ENCODE measurements at regions of chr19 and their contacts with region 1.

Region 1: GRCh38 chr19:11482384-11483050 is 1.7 kb upstream of the ELAVL3 start:
- DNase-seq: peak; percentile 89
- ATAC-seq: peak; percentile 8; the same call in 1 of the 2 replicates
- H3K4me3 Mint-ChIP-seq: peak overlapping the region; percentile 62
- H3K27ac Mint-ChIP-seq: no peak overlapping the region
- H3K4me1 Mint-ChIP-seq: peaks cover 13% of the 10 kb centered on the region
- H3K27me3 Mint-ChIP-seq: peaks cover 48% of the 10 kb centered on the region
- CTCF ChIP-seq: peak; percentile 97

Region 2: GRCh38 chr19:11361037-11361770 is 121.3 kb before region 1 on chr19:
- CTCF ChIA-PET with region 1: interaction called, 12 read pairs
- POLR2A ChIA-PET with region 1: no interaction called
- DNase-seq: peak; percentile 100
- ATAC-seq: peak; percentile 91
- H3K4me3 Mint-ChIP-seq: peak overlapping the region; percentile 76
- H3K27ac Mint-ChIP-seq: no peak overlapping the region
- H3K4me1 Mint-ChIP-seq: peaks cover 16% of the 10 kb centered on the region
- H3K27me3 Mint-ChIP-seq: peaks cover 53% of the 10 kb centered on the region
- CTCF ChIP-seq: no peak

Region 3: GRCh38 chr19:11399667-11400066 is 82.8 kb before region 1 on chr19:
- CTCF ChIA-PET with region 1: no interaction called
- POLR2A ChIA-PET with region 1: no interaction called
- DNase-seq: no peak
- ATAC-seq: no peak
- H3K4me3 Mint-ChIP-seq: no peak overlapping the region
- H3K27ac Mint-ChIP-seq: no peak overlapping the region
- H3K4me1 Mint-ChIP-seq: peaks cover 6% of the 10 kb centered on the region
- H3K27me3 Mint-ChIP-seq: no peaks in the 10 kb centered on the region; the same call in 1 of the 2 replicates
- CTCF ChIP-seq: no peak

Region 4: DNA sequence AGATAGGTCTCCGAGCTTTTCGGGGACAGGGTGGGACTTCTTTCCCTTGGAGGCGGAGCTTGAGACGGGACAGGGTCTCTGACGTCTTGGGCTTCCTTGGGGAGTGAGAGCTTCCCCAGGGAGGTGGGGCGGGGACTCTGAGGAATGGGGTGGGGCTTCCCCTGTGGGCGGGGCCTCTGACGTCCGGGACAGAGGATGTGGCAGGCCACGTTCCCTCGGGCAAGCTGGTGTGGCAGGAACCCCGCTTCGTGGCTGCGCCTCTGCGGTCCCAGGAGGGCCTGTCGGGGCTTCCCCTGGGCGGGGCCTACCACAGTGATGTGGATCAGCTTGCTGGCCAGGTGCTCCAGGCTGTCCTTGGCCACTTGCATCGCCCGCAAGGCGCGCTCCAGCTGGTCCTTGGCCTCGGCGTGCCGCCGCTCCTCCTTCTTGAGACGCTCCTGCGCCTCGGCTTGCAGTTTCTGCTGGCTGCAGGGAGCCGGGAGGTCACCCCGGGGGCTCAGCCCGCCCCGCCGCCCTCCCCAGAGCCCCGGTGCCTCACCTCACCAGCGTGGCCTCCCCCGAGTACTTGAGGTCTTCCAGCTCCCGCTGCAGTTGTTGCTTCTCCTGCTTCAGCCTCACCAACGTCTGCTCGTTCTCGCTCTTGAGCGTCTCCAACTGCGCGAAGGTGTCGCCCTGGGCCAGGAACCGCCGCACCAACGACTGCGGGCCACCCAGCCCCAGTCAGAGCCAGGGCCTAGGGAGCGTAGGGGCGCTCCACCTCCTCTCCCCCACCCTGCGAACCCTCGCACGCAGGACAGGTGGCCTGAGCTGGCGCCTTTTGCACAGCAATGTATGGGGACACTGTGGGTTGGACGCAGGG is 60.1 kb before region 1 on chr19:
- CTCF ChIA-PET with region 1: interaction called, 11 read pairs
- POLR2A ChIA-PET with region 1: interaction called, 4 read pairs
- DNase-seq: peak; percentile 99
- ATAC-seq: peak; percentile 70
- H3K4me3 Mint-ChIP-seq: peak overlapping the region; percentile 87
- H3K27ac Mint-ChIP-seq: peak overlapping the region; percentile 97
- H3K4me1 Mint-ChIP-seq: peaks cover 15% of the 10 kb centered on the region
- H3K27me3 Mint-ChIP-seq: peaks cover 29% of the 10 kb centered on the region
- CTCF ChIP-seq: no peak

Region 5: GRCh38 chr19:11453468-11454341 is 28.8 kb before region 1 on chr19:
- CTCF ChIA-PET with region 1: interaction called, 37 read pairs
- POLR2A ChIA-PET with region 1: interaction called, 8 read pairs
- DNase-seq: peak; percentile 64
- ATAC-seq: peak; percentile 49
- H3K4me3 Mint-ChIP-seq: no peak overlapping the region; the same call in 1 of the 2 replicates
- H3K27ac Mint-ChIP-seq: peak overlapping the region; percentile 93
- H3K4me1 Mint-ChIP-seq: peaks cover 28% of the 10 kb centered on the region
- H3K27me3 Mint-ChIP-seq: no peaks in the 10 kb centered on the region; the same call in 1 of the 2 replicates
- CTCF ChIP-seq: peak; percentile 46; the same call in 1 of the 2 replicates

Region 6: DNA sequence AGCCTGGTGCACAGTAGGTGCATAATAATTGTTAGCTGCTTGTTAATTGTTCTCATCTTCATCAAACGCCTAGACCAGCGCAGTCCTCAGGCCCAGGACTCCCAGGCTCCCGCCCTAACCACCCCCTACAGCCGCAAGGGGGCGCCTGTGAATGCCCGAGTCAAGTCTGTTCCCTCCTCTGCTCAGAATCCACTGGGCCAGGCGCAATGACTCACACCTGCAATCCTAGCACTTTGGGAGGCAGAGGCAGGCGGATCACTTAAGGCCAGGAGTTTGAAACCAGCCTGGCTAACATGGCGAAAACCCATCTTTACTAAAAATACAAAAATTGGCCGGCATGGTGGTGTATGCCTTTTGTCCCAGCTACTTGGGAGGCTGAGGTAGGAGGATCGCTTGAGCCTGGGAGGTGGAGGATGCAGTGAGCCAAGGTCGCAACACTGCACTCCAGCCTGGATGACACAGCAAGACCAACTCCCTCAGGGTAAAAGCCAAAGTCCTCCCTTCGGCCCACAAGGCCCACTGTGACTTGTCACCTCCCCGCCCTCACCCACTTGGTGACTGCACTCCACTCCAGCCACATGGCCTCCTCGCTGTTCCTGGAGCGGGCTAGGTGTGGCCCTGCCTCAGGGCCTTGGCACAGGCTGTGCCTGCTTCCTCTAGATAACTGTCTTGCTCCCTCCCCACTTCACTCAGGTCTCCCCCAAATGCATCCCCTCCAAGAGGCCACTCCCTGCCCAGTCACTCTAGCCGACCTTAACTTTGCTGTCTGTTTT is 14.1 kb after region 1 on chr19:
- CTCF ChIA-PET with region 1: interaction called, 12 read pairs
- POLR2A ChIA-PET with region 1: no interaction called
- DNase-seq: peak; percentile 91
- ATAC-seq: peak; percentile 97
- H3K4me3 Mint-ChIP-seq: no peak overlapping the region
- H3K27ac Mint-ChIP-seq: no peak overlapping the region
- H3K4me1 Mint-ChIP-seq: no peaks in the 10 kb centered on the region
- H3K27me3 Mint-ChIP-seq: no peaks in the 10 kb centered on the region
- CTCF ChIP-seq: peak; percentile 84

Measured in WTC11 (cell line).